Activated naive CD4-positive, alpha-beta T cell treated with anti-CD3 and anti-CD28 coated beads for 36 hours (primary cell): ENCODE measurements at regions of chr19 and their contacts with region 1.

Region 1: DNA sequence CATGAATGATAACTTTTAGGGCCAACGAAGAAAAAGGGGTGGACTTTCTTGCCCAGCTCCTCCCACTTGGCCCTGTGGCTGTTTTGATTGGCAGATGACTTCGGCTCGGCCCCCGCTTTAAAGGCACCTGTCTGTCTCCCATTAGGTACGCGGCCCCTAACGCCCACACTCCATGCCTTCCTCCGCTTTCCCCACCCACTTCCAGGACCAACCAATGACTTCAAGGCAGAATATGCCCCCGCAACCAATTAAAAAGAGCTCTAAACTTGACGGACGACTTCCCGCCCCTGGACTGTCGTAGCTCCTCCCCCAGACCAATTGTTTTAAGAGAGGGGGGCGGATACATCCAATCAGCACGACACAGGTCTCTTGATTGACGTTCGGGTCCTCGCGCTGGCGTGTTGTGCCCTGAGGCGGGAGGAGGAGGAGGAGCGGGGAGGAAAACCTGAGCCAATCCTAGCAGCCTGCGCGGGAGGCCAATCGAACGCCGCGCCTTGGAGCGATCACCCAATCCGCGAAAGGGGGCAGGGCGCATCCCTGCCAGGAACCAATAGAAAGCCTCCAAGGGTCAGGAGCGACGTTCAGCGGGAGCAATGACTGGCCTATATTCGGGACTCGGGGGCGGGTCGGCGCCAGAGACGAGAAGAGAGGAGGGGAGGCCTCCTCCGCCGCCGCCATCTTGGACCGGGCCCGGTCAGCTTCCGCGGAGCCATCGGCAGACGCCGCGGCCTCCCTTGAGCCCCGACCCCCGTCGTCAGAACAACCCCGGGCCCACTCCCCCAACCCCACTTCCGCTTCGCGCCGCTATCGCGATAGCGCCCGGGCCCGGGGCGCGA is at the start of gene CNOT3:
- DNase-seq: peak; percentile 100
- H3K4me3 Mint-ChIP-seq: peak within 1 kb of the TSS; percentile 83
- H3K27ac Mint-ChIP-seq: peak within 1 kb of the TSS; percentile 89
- H3K4me1 Mint-ChIP-seq: peaks cover 39% of the 10 kb centered on the region
- H3K27me3 Mint-ChIP-seq: no peaks in the 10 kb centered on the region
- total RNA-seq, gene CNOT3: 50.4 to 58.3 TPM

Region 2: DNA sequence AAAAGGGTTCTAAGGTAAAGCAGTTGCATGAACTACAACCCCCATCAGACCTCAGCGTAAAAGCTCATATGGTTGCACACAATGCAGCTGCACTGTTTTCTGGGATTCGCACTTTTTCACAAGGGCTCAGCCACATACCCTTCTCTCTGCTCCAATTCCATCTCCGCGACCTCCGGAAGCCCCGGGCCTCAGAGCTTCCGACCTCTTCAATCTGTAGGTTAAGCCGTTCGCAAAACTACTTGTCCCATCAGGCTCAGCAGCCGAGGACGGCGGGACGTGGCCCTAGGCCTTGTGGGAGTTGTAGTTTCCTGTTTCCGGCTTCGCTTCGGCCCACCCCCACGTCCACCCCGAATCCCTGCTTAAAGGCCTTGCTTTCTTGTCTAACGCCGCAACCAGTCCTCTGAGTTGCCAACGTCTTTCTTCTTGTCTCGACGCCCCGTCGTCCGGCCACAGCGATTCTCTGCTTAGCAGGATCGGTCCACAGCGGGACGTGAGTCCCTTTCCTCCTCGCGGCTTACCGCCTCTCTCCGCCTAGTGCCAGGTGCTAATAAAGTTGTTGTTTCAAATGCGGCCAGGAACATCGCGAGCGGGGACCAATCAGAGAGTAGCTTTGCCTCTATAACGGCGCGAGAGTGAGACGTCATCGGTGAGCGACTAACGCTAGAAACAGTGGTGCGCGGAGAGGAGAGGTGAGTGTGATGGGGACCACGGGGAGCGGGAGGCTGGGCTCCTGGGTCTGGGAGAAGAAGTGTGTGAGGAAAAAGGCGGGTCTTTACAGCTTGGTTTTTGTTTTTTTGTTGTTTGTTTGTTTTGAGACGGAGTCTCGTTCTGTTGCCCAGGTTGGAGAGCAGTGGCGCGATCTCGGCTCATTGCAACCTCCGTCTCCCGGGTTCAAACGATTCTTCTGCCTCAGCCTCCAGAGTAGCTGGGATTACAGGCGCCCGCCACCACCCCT is 21.9 kb before region 1 on chr19 and contains the starts of genes PRPF31 and TFPT:
- CTCF ChIA-PET with region 1: no interaction called
- intact Hi-C with region 1: loop called (anchors 1 kb)
- DNase-seq: peak; percentile 99
- H3K4me3 Mint-ChIP-seq: peak within 1 kb of the TSS; percentile 90
- H3K27ac Mint-ChIP-seq: peak within 1 kb of the TSS; percentile 97
- H3K4me1 Mint-ChIP-seq: peaks cover 30% of the 10 kb centered on the region
- H3K27me3 Mint-ChIP-seq: no peaks in the 10 kb centered on the region
- total RNA-seq, gene PRPF31: 67.5 to 71.8 TPM
- total RNA-seq, gene TFPT: 17.0 to 17.3 TPM